ENCODE measurements at regions of chr4 and their contacts with region 1.

Region 1: GRCh38 chr4:94127707-94128328 is 79.8 kb upstream of the SMARCAD1 start:
- DNase-seq: peak in 1 of 2 experiments; percentile 53
- H3K4me3 ChIP-seq: no peak overlapping the region
- H3K4me1 ChIP-seq: no peaks in the 10 kb centered on the region
- H3K27me3 ChIP-seq: no peaks in the 10 kb centered on the region

Region 2: GRCh38 chr4:93897559-93897958 is 230.3 kb before region 1 on chr4:
- in situ Hi-C with region 1: loop called (anchors 10 kb)
- DNase-seq: peak; percentile 14 to 80
- H3K4me3 ChIP-seq: no peak overlapping the region
- H3K4me1 ChIP-seq: peaks cover 5% of the 10 kb centered on the region
- H3K27me3 ChIP-seq: no peaks in the 10 kb centered on the region